Colonic mucosa (tissue), 4 donors: ENCODE measurements at regions of chr16 and their contacts with region 1.

Region 1: DNA sequence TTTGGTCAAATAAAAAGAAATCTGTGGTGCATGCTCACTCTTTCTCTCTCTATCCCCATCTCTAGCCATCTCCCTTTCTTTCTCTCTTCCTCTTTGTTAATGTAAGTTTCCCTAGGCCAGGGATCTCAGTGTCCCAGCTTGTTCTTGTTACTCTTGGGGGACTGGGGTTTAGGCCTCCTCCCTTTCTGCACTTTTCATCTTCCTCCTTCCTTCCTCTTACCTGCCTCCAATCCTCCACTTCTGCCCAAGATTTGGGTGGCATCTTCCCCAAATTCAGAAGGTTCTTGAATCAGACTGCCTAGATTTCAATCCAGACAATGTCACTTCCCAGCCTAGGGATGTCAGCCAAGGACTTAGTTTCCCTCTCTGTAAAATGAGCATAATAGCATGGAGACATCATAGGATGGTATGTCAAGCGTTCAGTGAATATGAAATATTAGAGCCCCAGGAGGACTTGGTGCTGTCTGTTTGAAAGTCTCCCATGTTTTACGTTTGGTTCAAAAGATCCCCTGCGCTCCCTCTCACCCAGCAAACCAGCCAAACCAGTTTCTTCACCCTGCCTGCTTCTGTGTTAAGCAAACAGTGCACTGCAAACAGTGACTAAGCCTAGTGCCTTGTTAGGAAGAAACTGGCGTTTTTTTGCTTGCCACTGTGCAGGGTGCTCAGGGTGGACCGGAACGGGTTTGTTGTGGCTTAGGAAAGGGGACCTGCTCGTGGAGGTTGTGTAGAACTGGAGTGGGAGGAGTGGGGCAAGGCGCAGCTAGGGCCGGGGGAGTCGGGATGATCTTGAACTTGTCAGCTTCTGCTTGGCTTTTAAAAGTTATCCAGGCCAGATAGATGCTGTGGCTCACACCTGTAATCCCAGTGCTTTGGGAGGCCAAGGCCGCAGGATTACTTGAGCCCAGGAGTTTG is 7.5 kb downstream of the CDH1 start:
- DNase-seq: peak; percentile 94
- H3K4me3 ChIP-seq: no peak overlapping the region
- H3K27ac ChIP-seq: peak overlapping the region; percentile 89
- H3K4me1 ChIP-seq: peaks cover 7% of the 10 kb centered on the region
- H3K27me3 ChIP-seq: no peaks in the 10 kb centered on the region
- CTCF ChIP-seq: no peak

Region 2: GRCh38 chr16:68382296-68382718 is 362.3 kb before region 1 on chr16:
- intact Hi-C with region 1: no loop called
- DNase-seq: peak; percentile 85
- H3K4me3 ChIP-seq: no peak overlapping the region
- H3K27ac ChIP-seq: no peak overlapping the region
- H3K4me1 ChIP-seq: peaks cover 13% of the 10 kb centered on the region
- H3K27me3 ChIP-seq: no peaks in the 10 kb centered on the region
- CTCF ChIP-seq: peak; percentile 66

Region 3: DNA sequence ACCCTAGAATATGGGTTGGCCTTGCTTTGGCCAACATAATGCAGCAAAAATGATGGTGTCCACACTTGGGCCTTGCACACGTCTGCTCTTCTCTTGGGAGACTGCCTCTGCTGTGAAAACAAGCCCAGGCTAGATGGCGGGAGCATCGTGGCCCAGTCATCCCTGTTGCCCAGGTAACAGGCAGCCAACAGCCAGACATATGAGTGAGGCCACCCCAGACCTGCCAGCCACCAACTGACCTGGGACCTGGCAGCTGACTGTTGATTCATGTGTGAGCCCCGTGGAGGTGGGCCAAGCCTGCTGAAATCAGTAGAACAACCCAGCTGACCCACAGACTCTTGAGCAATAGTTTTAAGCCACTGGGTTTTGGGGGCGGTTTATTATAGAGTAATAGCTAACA is 138.9 kb before region 1 on chr16:
- intact Hi-C with region 1: no loop called
- DNase-seq: no peak
- H3K4me3 ChIP-seq: no peak overlapping the region
- H3K27ac ChIP-seq: no peak overlapping the region
- H3K4me1 ChIP-seq: no peaks in the 10 kb centered on the region
- H3K27me3 ChIP-seq: no peaks in the 10 kb centered on the region
- CTCF ChIP-seq: no peak

Region 4: DNA sequence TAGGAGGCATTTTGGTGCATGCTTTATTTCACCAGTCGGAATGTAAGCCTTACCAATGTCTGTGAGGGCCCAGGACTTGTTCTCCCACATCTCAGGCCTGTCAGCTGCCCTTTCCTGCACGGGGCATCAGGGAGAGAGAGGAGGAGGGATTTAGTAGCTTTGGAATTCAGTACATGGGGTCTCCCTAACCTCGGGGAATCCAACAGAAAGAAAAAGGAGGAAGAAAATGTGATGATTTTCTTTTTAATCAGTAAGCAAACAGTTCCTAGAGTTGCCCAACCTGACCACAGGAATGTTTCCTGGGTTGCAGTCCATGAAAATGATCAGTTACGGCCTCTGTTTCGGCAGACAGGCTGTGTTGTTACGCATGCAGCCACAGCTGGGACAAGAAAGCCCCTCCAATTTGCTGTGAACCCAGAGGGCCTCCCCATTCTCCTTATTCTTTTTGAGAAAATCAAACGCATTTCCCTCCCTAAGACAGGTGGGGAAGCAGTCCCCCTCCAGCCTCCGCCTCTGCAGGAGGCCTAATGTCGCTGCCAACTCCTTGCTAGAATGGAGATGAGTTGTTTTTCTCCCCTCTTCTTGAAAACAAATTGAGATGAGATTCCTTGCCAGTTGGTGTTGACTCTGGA is 45.6 kb after region 1 on chr16:
- intact Hi-C with region 1: loop called (anchors 10 kb)
- DNase-seq: no peak
- H3K4me3 ChIP-seq: no peak overlapping the region
- H3K27ac ChIP-seq: no peak overlapping the region
- H3K4me1 ChIP-seq: peaks cover 8% of the 10 kb centered on the region
- H3K27me3 ChIP-seq: no peaks in the 10 kb centered on the region
- CTCF ChIP-seq: no peak

Region 5: DNA sequence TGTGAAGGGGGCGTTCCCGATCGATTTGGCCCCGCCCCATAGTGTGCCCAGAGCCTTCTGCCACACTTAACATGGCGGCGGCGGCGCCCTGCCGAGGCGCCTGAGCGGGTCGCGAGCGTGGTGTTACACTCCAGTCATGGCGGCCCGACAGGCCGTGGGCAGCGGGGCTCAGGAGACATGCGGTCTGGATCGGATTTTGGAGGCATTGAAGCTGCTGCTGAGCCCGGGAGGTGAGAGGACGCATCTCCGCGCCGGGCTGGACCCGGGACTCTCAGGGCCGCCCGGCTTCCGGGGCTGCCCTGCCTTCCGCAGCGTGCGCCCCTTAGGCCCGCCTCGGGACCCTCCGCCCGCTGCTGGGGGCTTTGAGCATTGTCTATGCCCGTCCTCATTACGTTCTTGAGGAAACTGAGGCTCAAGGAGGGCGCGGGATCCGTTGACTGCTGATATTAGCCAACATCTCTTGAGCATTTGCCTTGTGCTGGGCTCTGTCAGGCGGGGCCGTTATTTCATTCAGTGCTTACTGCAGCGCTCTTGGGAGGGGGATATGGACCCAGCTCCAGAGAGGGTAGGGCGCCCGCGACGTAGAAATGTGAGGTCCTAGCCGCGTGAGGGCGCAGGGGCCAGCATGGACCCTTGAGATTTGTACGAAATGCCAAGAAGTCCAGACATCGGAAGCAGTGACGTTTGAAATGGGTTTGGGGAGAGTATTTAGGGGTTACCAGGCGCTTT is 99.0 kb after region 1 on chr16 and contains the start of gene TANGO6:
- intact Hi-C with region 1: no loop called
- DNase-seq: peak; percentile 88
- H3K4me3 ChIP-seq: peak within 1 kb of the TSS; percentile 84
- H3K27ac ChIP-seq: peak within 1 kb of the TSS; percentile 54
- H3K4me1 ChIP-seq: no peaks in the 10 kb centered on the region
- H3K27me3 ChIP-seq: no peaks in the 10 kb centered on the region
- CTCF ChIP-seq: no peak
- total RNA-seq, gene TANGO6: 6.6 to 10.1 TPM

Region 6: DNA sequence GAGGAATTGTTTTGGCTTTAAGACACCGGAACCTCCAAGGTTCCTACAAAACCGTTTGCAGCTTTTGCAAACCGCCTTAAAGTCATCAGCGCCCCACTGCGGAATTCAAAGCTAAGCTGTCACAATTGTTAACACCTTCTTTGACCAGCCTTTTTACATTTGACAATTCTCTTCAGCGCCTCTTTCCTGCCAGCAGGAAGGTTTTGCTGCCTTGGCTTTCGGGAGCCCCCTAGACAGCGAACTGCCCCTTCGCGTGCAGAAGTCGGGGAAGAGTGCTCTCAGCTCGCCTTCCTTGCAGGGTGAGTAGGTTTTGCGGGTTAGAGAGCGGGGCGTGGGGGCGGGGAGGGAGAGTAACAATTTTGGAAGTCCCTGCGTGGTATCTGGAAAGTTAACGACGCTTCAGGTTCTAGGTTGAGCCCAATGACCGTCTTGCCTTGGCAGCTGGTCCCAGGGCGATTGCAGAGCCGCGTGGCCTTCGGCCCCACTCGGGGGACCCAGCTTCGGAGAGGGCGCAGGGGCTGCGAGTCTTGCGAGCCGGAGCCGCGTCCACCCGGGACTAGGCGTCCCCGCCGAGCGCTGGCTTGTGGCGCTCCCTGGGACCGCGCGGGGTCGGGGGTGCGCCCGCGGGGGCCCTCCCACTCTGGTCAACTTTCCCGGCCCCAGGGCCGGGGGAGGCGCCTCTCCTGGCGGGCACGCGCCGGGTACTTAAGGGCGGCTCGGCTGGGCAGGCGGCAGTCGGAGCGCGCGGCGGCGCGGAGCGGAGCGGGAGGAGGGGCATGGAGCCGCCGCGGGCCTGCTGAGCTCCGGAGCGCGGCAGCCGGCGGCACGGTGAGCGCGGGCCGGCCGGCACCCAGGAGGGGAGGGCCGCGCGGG is 361.1 kb after region 1 on chr16 and contains the start of gene HAS3:
- intact Hi-C with region 1: no loop called
- DNase-seq: peak; percentile 63
- H3K4me3 ChIP-seq: peak within 1 kb of the TSS; percentile 54
- H3K27ac ChIP-seq: no peak within 1 kb of the TSS
- H3K4me1 ChIP-seq: peaks cover 13% of the 10 kb centered on the region
- H3K27me3 ChIP-seq: no peaks in the 10 kb centered on the region
- CTCF ChIP-seq: no peak
- total RNA-seq, gene HAS3: 5.1 to 19.9 TPM